ENCODE measurements at regions of chr15 and their contacts with region 1.

Region 1: GRCh38 chr15:76235186-76235826 is 76.0 kb downstream of the ETFA start:
- DNase-seq: peak; percentile 4
- H3K4me3 ChIP-seq: no peak overlapping the region
- CTCF ChIP-seq: peak; percentile 13

Region 2: GRCh38 chr15:76181705-76182107 is 53.6 kb before region 1 on chr15:
- CTCF ChIA-PET with region 1: no interaction called
- POLR2A ChIA-PET with region 1: no interaction called
- DNase-seq: no peak
- H3K4me3 ChIP-seq: no peak overlapping the region
- CTCF ChIP-seq: no peak

Region 3: DNA sequence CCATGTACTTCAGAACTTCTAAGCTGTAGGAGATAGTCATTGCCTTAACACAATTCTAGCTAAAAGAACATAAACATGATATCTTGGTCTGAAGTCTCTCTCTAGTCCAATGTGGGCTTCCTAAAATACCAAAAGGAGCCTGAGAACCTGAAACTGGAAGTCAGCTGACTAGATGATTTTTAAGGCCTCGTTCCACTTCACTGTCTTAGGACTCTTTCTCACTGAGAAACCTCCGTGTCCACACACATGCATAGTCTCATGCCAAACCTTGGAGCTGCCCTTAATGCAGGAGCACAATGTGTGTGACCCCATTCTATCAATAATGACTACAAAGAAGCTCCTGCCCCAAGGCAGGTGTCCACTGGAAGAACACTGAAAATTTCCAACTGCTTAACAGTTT is 11.8 kb before region 1 on chr15:
- CTCF ChIA-PET with region 1: interaction called, 16 read pairs
- POLR2A ChIA-PET with region 1: no interaction called
- DNase-seq: no peak
- H3K4me3 ChIP-seq: no peak overlapping the region
- CTCF ChIP-seq: no peak

Region 4: GRCh38 chr15:76249721-76250120 is 14.4 kb after region 1 on chr15:
- CTCF ChIA-PET with region 1: interaction called, 11 read pairs
- POLR2A ChIA-PET with region 1: no interaction called
- DNase-seq: no peak
- H3K4me3 ChIP-seq: no peak overlapping the region
- CTCF ChIP-seq: no peak

Region 5: DNA sequence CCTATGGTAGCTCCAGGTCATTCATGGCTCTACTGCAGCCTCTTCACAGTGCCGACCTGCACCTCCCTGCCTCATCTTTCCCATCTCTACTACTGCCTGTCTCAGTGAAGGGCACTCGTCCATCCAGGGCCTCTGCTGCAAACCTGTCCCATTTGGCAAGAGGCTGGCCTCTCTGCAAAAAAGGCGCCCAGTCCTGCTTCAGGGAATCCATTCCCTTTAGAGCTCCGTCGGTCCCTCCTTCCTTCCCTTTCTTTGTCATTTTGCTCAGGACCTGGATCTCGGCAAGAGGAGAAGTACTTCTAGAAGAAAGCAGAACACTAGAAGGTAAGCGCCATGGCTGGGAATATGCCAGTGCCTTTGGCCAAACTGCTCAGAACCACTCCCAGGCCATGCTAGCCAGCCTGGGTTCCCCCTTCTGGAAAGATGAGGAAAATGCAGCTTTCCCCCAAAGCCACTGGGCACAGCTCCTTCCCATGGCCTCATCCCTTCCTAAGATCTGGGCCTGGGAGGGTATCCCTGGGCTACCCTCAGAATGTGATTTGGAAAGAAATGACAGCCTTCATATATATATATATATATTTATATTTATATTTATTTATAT is 94.9 kb after region 1 on chr15:
- CTCF ChIA-PET with region 1: interaction called, 20 read pairs
- POLR2A ChIA-PET with region 1: no interaction called
- DNase-seq: no peak
- H3K4me3 ChIP-seq: no peak overlapping the region
- CTCF ChIP-seq: peak; percentile 76

Region 6: DNA sequence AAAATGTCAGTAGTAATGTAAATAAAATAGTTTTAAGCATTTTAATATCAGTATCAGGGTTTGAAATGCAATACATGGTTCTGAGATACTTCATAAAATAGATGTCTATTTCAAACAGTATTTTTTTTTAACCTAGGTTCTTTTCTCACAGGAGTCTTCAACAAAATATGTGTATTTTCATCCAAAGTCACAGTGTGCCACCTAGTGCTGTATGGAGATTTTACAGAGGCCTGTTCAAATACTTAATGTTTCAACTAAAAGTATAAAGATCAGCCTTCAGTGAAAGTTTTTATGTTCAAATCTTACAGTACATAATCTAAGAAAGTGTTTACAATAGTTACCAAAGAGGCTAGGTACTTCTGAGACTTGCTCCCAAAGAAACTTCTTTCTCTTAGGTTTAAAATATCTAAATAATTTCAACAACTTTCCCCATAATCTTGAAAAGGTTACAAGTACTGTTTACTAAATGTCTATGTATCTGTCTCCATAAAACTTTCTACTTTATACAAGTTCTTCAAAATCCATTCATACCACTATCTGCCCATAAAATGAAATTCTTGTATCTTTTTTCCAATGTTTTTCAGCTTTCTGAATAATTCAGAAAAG is 631.5 kb after region 1 on chr15:
- CTCF ChIA-PET with region 1: interaction called, 56 read pairs
- POLR2A ChIA-PET with region 1: no interaction called
- DNase-seq: peak; percentile 10
- H3K4me3 ChIP-seq: no peak overlapping the region
- CTCF ChIP-seq: peak; percentile 43

Region 7: DNA sequence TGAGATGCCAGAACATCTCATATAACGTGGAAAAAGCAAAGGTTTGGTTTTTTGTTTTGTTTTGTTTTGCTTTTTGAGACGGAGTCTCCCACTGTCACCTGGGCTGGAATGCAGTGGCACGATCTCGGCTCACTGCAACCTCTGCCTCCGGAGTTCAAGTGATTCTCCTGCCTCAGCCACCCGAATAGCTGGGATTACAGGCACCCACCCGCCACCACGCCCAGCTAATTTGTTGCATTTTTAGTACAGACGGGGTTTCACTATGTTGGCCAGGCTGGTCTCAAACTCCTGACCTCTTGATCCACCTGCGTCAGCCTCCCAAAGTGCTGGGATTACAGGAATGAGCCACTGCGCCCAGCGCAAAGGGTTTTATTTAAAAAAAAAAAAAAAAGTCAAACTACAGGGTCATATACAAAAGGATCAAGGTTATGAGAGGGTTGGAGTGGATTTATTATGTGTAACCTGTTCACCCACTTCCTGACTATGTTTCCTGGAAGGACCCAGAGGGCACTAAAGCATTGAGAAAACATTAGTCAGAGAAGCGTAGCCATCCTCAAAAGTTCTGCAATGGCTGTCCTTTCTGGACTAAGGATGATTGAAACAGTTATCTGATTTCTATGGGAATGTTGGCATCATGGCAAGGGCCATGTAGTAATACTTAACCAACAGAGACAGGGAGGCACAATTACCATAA is 677.0 kb after region 1 on chr15:
- CTCF ChIA-PET with region 1: no interaction called
- POLR2A ChIA-PET with region 1: no interaction called
- DNase-seq: no peak
- H3K4me3 ChIP-seq: no peak overlapping the region
- CTCF ChIP-seq: no peak

Measured in AG04449 (cell line).